ENCODE measurements at regions of chr6 and their contacts with region 1.

Region 1: DNA sequence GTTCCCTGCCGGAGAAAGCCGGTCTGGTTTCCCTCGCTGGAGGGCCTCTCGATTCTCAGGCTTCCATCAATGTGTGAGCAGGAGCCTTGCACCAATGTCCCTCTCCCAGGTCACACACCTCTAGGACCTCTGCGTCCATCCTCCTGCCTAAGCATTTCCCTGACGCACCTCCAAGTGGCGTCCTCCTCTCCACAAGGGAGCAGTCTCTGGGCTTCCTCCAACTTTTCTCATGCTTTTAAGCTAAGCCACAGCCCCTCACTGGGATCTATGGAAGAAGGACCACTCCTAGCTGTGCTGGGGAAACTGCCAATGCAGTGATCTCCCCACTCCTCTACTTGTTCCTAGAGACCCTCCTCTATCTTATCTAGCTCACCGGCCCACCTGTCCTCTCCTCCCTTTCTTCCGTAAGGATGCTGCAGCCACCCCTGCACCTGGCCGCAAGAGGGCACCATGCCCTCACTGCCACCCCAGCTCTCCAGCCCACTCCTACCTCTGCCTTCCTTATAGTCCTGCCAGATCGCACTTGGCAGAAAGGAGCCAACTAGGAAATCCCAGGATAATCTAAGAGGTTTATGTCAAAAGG is 258.7 kb downstream of the LRFN2 start:
- DNase-seq: no peak
- H3K4me3 ChIP-seq: no peak overlapping the region
- H3K27ac ChIP-seq: no peak overlapping the region
- H3K4me1 ChIP-seq: no peaks in the 10 kb centered on the region
- H3K27me3 ChIP-seq: no peaks in the 10 kb centered on the region
- CTCF ChIP-seq: peak in 2 of 3 experiments; percentile 25 to 27
- POLR2A ChIP-seq: no peak

Region 2: GRCh38 chr6:39357998-39358686 is 970.4 kb before region 1 on chr6:
- intact Hi-C with region 1: loop called (anchors 10 kb)
- DNase-seq: no peak
- H3K4me3 ChIP-seq: no peak overlapping the region
- H3K27ac ChIP-seq: no peak overlapping the region
- H3K4me1 ChIP-seq: no peaks in the 10 kb centered on the region
- H3K27me3 ChIP-seq: no peaks in the 10 kb centered on the region
- CTCF ChIP-seq: no peak
- POLR2A ChIP-seq: no peak

Region 3: DNA sequence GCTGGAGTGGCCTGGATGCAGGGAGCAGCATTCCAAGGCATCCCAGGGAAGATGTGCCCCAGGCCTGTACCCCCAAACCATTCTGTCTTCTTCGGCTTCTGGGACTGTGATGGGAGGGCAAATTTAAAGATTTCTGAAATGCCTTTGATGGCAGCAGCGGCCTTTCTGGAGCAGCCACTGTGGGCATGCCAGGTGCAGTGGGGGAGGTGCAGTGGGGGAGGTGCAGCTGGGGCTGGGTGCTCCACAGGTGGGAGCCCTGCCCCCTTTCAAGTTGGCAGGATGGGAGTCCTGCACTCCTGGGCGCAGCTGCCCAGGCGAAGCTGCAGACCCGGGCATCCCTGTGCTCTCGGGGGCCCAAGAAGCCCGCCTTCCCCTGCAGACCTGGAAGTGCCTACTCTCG is 100.8 kb before region 1 on chr6:
- intact Hi-C with region 1: no loop called
- DNase-seq: no peak
- H3K4me3 ChIP-seq: no peak overlapping the region
- H3K27ac ChIP-seq: no peak overlapping the region
- H3K4me1 ChIP-seq: no peaks in the 10 kb centered on the region
- H3K27me3 ChIP-seq: no peaks in the 10 kb centered on the region
- CTCF ChIP-seq: no peak
- POLR2A ChIP-seq: no peak